Right ventricle myocardium inferior (tissue), 1 donor: ENCODE measurements at regions of chr7 and their contacts with region 1.

Region 1: DNA sequence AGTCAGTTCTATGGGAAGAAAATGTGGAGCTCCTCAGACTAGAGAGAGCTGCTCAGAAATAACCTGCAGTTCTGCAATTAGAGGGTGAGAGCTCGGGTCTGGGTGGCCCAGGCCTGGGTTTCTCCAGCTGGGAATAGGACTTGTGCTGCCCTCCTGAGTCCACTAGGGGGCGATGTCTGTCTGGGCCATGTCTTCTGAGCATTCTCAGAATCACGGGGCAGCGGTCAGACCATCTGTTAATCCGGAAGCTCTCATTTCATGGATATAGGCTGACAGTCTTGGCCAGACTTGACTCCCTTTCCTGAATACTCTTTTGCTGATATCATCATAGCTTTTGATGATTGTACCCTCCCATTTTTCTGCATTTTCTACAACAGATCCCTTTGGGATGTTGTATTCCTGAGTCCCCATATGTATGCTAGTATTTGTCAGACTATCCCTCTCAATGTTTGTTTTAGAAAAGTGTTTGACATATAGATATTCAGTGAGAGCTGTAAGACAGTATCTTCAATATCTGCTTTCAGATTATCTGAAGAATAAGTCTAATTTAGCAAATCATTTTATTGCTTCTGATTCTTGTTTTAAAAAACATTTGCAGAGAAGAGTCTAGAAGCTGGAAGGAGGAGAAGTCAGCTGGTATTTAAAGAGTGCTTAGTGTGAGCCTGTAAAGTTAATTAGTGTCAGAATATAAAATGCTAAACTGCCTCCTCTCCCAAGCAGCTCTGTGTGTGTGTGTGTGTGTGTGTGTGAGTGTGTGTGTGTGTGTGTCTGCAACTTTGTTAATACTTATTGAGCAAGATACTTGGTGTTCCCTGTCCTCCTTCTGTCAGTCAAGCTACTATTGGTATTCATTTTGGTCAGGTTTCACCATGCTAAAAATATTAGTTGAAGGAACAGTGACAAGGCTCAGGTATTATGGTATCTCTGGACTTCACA is 38.0 kb downstream of the STARD3NL start:
- DNase-seq: peak; percentile 90
- ATAC-seq: peak; percentile 86

Region 2: GRCh38 chr7:38178004-38178694 is 37.9 kb before region 1 on chr7 and contains the start of gene STARD3NL:
- intact Hi-C with region 1: loop called (anchors 2 kb)
- DNase-seq: peak; percentile 96
- ATAC-seq: peak; percentile 99
- total RNA-seq, gene STARD3NL: 22.9 TPM

Region 3: DNA sequence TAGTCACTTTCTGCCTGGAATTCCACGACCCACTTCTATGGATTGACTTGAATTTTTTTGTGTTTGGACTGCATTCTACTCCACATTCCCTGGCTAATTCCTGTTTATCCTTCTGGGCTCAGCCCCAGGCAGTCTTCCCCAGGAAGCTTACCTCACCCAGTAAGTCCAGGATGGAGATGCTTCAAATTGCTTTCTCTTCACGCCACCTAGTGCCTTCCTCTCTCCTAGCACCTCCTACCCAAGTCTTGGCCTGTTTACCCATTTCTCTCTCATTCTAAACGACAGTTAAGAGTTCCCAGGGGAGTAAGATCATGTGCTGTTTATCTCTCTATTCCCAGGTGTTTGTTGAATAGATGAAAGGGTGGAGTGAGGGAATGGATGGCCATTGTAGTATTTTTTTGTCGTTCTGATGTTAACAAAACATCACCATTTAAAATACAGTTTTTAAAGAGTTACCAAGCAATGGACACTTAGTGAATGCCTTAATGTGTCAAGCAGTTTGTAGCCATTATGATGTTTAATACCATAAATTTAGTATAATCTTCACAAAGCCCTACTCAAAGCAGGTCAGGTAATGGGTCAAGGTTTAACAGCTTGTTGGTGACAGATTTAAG is 102.9 kb after region 1 on chr7:
- intact Hi-C with region 1: loop called (anchors 2 kb)
- DNase-seq: no peak
- ATAC-seq: peak; percentile 46